ENCODE measurements at regions of chr14 and their contacts with region 1.

Region 1: DNA sequence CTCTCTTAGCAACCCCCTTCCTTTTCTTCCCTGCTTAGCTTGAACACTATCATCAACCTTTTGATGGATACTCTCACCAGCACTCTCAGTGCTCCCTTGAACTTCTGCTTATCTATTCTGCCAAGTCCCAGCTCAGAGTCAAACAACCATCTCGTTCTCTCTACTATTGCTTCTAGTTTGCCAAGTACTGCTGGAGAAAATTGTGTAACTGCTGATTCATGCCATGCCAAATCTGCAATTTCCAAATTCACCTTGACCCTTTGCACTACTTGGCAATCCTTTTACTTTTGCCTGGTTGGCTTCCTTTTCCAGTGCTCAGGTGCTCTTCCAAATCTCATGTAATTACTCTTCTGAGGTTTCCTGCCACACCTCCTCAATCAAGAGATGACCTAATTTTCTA is 2.8 kb upstream of the CCDC196 start:
- DNase-seq: no peak
- ATAC-seq: peak; percentile 77 to 97 (median 93)
- H3K4me3 ChIP-seq: no peak overlapping the region
- H3K27ac ChIP-seq: peak overlapping the region in 6 of 12 donors; percentile 13 to 49 (median 30)
- H3K4me1 ChIP-seq: peaks cover 0 to 22% (median 10%) of the 10 kb centered on the region in 12 donors
- H3K27me3 ChIP-seq: no peaks in the 10 kb centered on the region
- CTCF ChIP-seq: no peak
- POLR2A ChIP-seq: no peak

Region 2: DNA sequence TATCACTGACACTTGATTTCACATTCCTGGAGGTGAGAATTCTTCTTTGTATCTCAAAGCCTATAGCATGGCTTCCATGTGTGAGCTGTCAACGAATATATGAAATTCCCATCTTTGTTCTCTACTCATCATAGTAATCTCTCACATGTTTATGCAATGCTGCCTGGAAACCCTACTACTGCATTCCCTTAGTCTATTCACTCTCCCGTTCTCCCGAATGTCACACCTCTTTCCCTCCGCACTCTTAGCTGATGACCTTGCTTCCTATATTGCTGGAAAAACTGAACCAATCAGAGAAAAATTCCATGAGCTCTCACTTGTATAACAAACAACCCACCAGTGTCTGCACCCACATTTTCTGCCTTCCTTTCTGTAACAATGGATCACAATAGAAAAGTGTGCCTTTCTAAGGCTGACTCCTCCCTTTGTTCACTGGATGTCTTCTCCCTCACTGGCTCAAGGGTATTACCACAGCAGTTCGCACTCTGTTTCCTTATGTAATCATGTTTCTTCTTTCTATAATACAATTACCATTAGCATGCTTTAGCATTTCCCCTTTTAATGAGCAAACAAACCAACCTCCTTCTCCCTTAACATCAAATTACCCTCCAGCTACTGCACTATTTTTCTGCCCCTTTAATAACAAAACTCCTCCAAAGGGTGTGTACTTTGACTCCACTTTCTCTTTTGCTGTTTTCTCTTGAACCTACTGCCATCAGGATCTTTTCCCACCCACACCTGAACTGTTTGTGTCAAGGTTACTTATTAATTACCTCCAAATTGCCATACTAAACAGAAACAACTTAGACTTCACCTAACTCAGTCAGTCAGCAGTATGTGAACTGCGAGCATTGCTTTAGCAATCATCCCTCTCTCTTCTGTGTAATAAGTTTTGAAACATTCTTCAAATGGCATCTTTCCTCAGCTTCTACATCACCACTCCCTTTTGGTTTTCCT is 61.1 kb before region 1 on chr14:
- intact Hi-C with region 1: loop called in 1 of 10 experiments (anchors 5 kb)
- DNase-seq: no peak
- ATAC-seq: no peak
- H3K4me3 ChIP-seq: no peak overlapping the region
- H3K27ac ChIP-seq: no peak overlapping the region
- H3K4me1 ChIP-seq: peaks cover 0 to 19% (median 1%) of the 10 kb centered on the region in 12 donors
- H3K27me3 ChIP-seq: no peaks in the 10 kb centered on the region
- CTCF ChIP-seq: no peak
- POLR2A ChIP-seq: no peak

Measured in heart left ventricle (tissue), 16 donors.